ENCODE measurements at regions of chr11 and their contacts with region 1.

Region 1: DNA sequence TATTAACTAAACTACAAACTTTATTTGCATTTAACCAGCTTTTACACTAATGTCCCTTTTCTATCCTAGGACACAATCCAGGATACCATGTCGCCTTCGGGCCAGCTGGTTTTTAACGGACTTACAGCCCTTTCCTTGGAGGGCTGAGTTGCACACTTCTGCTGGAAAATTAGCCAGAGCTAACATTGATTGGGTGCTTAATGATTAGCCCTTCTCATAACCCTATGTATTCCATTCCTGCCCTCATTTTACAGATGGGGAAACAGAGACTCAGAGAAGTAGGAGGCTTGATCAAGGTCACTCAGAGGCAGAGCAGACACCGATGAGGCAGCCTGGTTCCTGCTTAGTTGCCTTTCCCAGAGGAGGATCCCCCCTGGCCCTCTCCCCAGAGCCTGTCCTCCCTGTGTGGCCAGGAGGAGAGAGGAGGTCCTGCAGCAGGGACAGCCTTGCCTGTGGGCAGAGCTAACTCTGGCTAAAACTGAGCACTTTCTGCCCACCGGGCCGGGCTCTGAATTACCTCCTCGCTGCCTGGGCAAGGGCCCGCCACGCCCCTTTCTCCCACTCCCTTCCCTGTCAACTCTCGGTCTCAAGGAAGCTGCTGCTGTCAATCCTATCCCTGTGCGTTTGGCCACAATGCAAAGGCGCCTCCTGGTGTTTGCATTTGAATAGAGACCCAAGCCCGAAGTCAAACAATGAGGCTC is 59.6 kb upstream of the PAX6 start:
- DNase-seq: peak; percentile 33
- ATAC-seq: peak; percentile 82
- H3K4me3 ChIP-seq: no peak overlapping the region
- H3K27ac ChIP-seq: no peak overlapping the region
- H3K4me1 ChIP-seq: no peaks in the 10 kb centered on the region
- H3K27me3 ChIP-seq: peaks cover 14% of the 10 kb centered on the region
- CTCF ChIP-seq: peak; percentile 71
- POLR2A ChIP-seq: no peak
- RAD21 ChIP-seq: peak; percentile 82

Region 2: GRCh38 chr11:31240338-31240904 is 630.3 kb before region 1 on chr11:
- CTCF ChIA-PET with region 1: no interaction called
- POLR2A ChIA-PET with region 1: no interaction called
- dilution Hi-C with region 1: no loop called
- in situ Hi-C with region 1: no loop called
- intact Hi-C with region 1: loop called (anchors 1 kb)
- DNase-seq: peak; percentile 33
- ATAC-seq: no peak; the same call in 1 of the 2 replicates
- H3K4me3 ChIP-seq: no peak overlapping the region
- H3K27ac ChIP-seq: no peak overlapping the region
- H3K4me1 ChIP-seq: no peaks in the 10 kb centered on the region
- H3K27me3 ChIP-seq: no peaks in the 10 kb centered on the region
- CTCF ChIP-seq: peak; percentile 45
- POLR2A ChIP-seq: no peak
- RAD21 ChIP-seq: peak; percentile 43; the same call in 1 of the 2 replicates

Region 3: GRCh38 chr11:31340903-31341572 is 529.7 kb before region 1 on chr11:
- CTCF ChIA-PET with region 1: no interaction called
- POLR2A ChIA-PET with region 1: no interaction called
- dilution Hi-C with region 1: no loop called
- in situ Hi-C with region 1: no loop called
- intact Hi-C with region 1: loop called (anchors 10 kb)
- DNase-seq: peak; percentile 41
- ATAC-seq: peak; percentile 46; the same call in 1 of the 2 replicates
- H3K4me3 ChIP-seq: no peak overlapping the region
- H3K27ac ChIP-seq: no peak overlapping the region
- H3K4me1 ChIP-seq: no peaks in the 10 kb centered on the region
- H3K27me3 ChIP-seq: no peaks in the 10 kb centered on the region
- CTCF ChIP-seq: peak; percentile 55
- POLR2A ChIP-seq: no peak
- RAD21 ChIP-seq: peak; percentile 45

Region 4: DNA sequence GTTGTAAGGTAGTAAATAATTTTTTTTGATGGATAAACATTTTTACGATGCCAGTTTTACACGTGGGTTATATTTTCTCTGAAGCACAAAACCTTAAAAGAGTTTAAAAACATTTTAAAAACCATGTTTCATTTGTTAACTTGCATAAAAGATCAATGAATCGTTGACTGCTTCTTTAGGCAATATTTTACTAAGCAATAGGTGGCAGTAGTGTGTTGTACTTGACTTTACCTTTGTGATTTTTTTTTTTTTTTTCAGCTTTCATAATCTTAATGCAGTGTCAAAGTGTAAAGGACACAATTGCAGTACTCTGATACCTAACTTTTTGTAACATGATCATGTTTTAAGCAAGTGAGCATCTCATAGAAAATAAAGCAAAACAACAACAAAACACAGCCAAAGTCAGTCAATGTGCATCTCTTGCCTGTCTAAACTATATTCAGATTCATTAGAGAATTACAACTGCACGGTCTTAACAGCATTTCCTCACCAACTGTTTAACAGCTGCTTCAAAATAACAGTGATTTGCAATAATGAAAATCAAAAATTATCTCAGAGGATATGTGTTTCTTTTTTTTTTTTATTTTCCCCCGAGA is 473.4 kb before region 1 on chr11:
- CTCF ChIA-PET with region 1: no interaction called
- POLR2A ChIA-PET with region 1: no interaction called
- dilution Hi-C with region 1: no loop called
- in situ Hi-C with region 1: loop called (anchors 10 kb)
- intact Hi-C with region 1: loop called (anchors 1 kb)
- DNase-seq: peak; percentile 22
- ATAC-seq: peak; percentile 54; the same call in 1 of the 2 replicates
- H3K4me3 ChIP-seq: no peak overlapping the region
- H3K27ac ChIP-seq: no peak overlapping the region
- H3K4me1 ChIP-seq: no peaks in the 10 kb centered on the region
- H3K27me3 ChIP-seq: no peaks in the 10 kb centered on the region
- CTCF ChIP-seq: peak; percentile 74
- POLR2A ChIP-seq: no peak
- RAD21 ChIP-seq: peak; percentile 77

Region 5: GRCh38 chr11:31487848-31488247 is 382.9 kb before region 1 on chr11:
- CTCF ChIA-PET with region 1: interaction called, 4 read pairs
- POLR2A ChIA-PET with region 1: no interaction called
- dilution Hi-C with region 1: no loop called
- in situ Hi-C with region 1: loop called (anchors 10 kb)
- intact Hi-C with region 1: loop called (anchors 1 kb)
- DNase-seq: peak; percentile 73
- ATAC-seq: peak; percentile 82
- H3K4me3 ChIP-seq: no peak overlapping the region
- H3K27ac ChIP-seq: no peak overlapping the region
- H3K4me1 ChIP-seq: no peaks in the 10 kb centered on the region
- H3K27me3 ChIP-seq: no peaks in the 10 kb centered on the region
- CTCF ChIP-seq: peak; percentile 60
- POLR2A ChIP-seq: no peak
- RAD21 ChIP-seq: peak; percentile 63

Region 6: DNA sequence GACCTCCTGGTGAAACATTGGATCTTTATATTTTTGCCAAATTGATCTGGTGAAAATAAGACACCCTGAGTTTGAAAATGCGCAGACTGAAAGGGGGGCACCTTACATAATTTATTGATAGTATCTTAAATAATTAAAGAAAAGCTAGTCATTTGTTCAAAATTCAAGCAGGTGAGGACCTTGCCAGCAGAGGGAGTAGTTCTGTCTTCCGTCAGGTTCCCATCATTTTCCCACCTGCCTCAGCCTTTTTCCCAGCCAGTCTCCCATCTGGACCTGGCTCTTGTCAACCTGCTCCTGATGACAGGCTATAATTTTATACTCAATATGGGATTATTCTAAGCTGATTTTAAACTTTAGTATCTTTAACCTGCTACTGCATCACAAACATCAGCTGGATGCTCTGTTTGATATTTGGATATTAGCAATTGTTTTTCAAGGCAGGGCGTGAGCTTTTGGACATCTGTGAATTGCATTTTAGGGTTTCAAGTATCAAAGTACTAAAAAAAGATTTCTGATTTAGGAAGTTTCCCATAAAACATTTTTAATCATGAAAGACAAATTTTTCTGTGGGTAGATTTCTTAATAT is 229.2 kb before region 1 on chr11:
- CTCF ChIA-PET with region 1: interaction called, 3 read pairs
- POLR2A ChIA-PET with region 1: no interaction called
- dilution Hi-C with region 1: no loop called
- in situ Hi-C with region 1: no loop called
- intact Hi-C with region 1: loop called (anchors 2 kb)
- DNase-seq: peak; percentile 36
- ATAC-seq: no peak
- H3K4me3 ChIP-seq: no peak overlapping the region
- H3K27ac ChIP-seq: no peak overlapping the region
- H3K4me1 ChIP-seq: no peaks in the 10 kb centered on the region
- H3K27me3 ChIP-seq: no peaks in the 10 kb centered on the region
- CTCF ChIP-seq: peak; percentile 46
- POLR2A ChIP-seq: no peak
- RAD21 ChIP-seq: peak; percentile 41

Region 7: GRCh38 chr11:32448232-32448631 is 577.5 kb after region 1 on chr11:
- CTCF ChIA-PET with region 1: no interaction called
- POLR2A ChIA-PET with region 1: no interaction called
- dilution Hi-C with region 1: no loop called
- in situ Hi-C with region 1: no loop called
- intact Hi-C with region 1: no loop called
- DNase-seq: no peak
- ATAC-seq: no peak
- H3K4me3 ChIP-seq: no peak overlapping the region
- H3K27ac ChIP-seq: no peak overlapping the region
- H3K4me1 ChIP-seq: no peaks in the 10 kb centered on the region
- H3K27me3 ChIP-seq: peaks cover 1% of the 10 kb centered on the region; the same call in 1 of the 2 replicates
- CTCF ChIP-seq: no peak
- POLR2A ChIP-seq: no peak
- RAD21 ChIP-seq: no peak

Measured in IMR-90 (cell line).